ENCODE measurements at regions of chr11 and their contacts with region 1.

Region 1: DNA sequence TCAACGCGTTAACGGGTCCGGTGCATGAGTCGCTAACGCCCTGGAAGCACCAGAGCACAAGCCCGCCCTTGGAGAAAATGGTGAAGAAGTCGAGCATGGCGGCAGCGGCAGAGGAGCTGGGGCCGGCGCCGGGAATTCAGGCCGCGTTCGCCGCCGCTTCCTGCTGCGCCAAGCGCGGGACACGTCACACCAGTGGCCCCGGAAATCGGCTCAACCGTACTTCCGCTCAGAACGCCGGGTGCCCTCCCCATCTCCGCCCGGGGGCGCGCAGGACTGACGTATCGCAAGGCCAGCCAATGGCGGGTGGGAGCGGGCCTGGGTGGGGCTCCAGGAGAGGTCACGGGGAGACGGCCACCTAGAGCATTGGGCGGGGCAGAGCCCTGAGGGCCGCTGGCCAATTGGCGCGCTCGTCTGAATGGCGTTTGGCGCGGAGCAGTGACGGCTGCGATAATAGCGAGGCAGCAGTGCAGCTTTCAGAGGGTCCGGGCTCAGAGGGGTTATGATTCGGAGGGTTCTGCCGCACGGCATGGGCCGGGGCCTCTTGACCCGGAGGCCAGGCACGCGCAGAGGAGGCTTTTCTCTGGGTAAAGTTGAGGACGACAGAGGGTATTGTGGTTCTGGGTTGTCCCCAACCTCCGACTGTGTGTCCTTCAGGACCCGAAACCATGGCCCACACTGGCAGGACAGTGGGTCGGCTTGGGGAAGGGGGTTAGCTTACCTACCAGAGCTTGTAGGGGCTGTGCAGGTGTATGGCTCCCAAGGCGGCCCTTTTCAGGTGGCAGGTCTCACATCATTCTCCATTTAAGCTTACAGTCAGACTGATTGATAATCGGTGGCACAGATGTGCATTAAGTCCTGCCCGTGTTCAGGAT is at the starts of genes FOXRED1 and SRPRA:
- DNase-seq: peak; percentile 98 to 100 (median 100)
- ATAC-seq: peak; percentile 100
- H3K4me3 ChIP-seq: peak within 1 kb of the TSS; percentile 99
- H3K4me3 Mint-ChIP-seq: peak within 1 kb of the TSS; percentile 91 to 98 (median 97)
- H3K27ac ChIP-seq: peak within 1 kb of the TSS; percentile 94
- H3K27ac Mint-ChIP-seq: peak within 1 kb of the TSS; percentile 94 to 99 (median 98)
- H3K4me1 ChIP-seq: peaks cover 22 to 23% of the 10 kb centered on the region in 2 donors
- H3K4me1 Mint-ChIP-seq: peaks cover 26 to 60% (median 47%) of the 10 kb centered on the region in 7 donors
- H3K27me3 ChIP-seq: no peaks in the 10 kb centered on the region
- H3K27me3 Mint-ChIP-seq: no peaks in the 10 kb centered on the region
- total RNA-seq, gene FOXRED1: 27.5 to 42.7 (median 35.5) TPM
- total RNA-seq, gene SRPRA: 141 to 179 (median 150) TPM

Region 2: DNA sequence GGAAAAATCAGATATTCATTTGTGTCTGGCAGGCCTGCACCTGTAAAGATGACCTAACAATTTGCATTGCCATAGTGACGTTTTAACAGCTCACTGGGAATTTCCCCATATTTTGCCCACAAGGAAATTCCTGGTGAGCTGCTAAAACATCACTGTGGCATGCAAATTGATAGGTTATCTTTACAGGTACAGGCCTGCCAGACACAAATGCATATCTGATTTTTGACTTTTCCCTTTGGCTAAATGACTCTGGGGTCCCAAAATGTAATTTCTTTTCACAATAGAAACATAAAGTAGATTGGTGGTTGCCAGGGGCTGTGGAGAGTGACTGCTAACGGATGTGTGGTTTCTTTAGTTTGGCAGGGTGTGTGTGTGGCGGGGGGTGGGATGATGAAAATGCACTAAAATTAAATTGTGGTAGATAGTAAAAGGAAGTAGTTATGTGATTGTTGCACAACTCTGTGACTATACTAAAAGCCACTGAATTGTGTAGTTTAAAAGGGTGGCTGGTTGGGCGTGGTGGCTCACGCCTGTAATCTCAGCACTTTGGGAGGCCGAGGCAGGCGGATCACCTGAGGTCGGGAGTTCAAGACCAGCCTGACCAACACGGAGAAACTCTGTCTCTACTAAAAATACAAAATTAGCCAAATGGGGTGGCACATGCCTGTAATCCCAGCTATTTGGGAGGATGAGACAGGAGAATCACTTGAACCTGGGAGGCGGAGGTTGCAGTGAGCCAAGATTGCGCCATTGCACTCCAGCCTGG is 754.4 kb before region 1 on chr11:
- CTCF ChIA-PET with region 1: no interaction called
- POLR2A ChIA-PET with region 1: no interaction called
- intact Hi-C with region 1: loop called in 1 of 2 experiments (anchors 2 kb)
- DNase-seq: peak; percentile 16 to 72 (median 53)
- ATAC-seq: peak; percentile 87
- H3K4me3 ChIP-seq: no peak overlapping the region
- H3K4me3 Mint-ChIP-seq: peak overlapping the region; percentile 12 to 72 (median 44)
- H3K27ac ChIP-seq: peak overlapping the region; percentile 56
- H3K27ac Mint-ChIP-seq: peak overlapping the region; percentile 58 to 94 (median 85)
- H3K4me1 ChIP-seq: peaks cover 17 to 24% of the 10 kb centered on the region in 2 donors
- H3K4me1 Mint-ChIP-seq: peaks cover 30 to 47% (median 38%) of the 10 kb centered on the region in 7 donors
- H3K27me3 ChIP-seq: no peaks in the 10 kb centered on the region
- H3K27me3 Mint-ChIP-seq: no peaks in the 10 kb centered on the region

Region 3: DNA sequence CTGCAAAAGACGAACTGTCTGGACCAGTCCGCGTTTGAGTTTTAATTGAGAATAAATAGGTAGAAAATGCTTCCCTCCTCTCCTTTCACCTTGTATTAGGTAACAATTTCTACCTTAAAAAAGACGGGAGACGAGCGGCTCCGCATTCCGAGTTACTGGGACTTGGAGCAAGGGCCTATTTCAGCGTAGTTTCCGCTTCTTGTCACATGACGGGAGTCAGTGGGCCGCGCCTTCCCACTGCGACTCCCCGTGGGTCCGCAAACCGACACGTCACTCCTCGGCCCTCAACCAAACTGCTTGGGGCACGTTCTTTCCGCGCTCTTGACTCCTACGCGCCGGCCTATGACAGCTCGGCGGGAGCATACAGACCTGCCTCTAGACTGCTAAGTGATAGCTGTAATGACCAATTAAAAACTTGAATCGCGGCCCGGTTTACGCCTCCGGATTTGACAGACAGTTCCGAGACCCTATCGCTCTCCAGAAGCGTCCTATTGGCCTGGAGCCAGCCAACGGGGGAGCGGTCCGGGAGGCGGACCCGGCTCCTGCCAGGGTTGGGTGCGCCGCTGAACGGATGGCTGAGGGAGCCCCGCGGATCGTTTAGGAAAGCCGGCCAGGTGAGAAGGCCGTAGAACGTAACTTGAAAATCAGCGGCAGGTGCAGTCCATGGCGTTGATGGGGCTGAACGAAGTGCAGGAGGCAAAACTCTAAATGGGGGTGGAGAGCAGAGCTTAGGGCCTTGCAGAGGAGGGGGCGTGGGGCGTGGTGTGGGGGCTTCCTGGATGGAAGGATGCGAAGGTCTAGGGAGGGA is 676.4 kb before region 1 on chr11 and contains the start of gene STT3A:
- CTCF ChIA-PET with region 1: no interaction called
- POLR2A ChIA-PET with region 1: interaction called, 3 read pairs
- intact Hi-C with region 1: loop called (anchors 1 to 2 kb)
- DNase-seq: peak; percentile 94 to 99 (median 99)
- ATAC-seq: peak; percentile 96
- H3K4me3 ChIP-seq: peak within 1 kb of the TSS; percentile 94
- H3K4me3 Mint-ChIP-seq: peak within 1 kb of the TSS; percentile 88 to 99 (median 96)
- H3K27ac ChIP-seq: peak within 1 kb of the TSS; percentile 95
- H3K27ac Mint-ChIP-seq: peak within 1 kb of the TSS; percentile 94 to 100 (median 99)
- H3K4me1 ChIP-seq: peaks cover 13% of the 10 kb centered on the region in 2 donors
- H3K4me1 Mint-ChIP-seq: peaks cover 30 to 62% (median 53%) of the 10 kb centered on the region in 7 donors
- H3K27me3 ChIP-seq: no peaks in the 10 kb centered on the region
- H3K27me3 Mint-ChIP-seq: no peaks in the 10 kb centered on the region
- total RNA-seq, gene STT3A: 39.6 to 153 (median 84.5) TPM

Region 4: GRCh38 chr11:125902927-125903710 is 365.8 kb before region 1 on chr11 and contains the start of gene PUS3:
- CTCF ChIA-PET with region 1: no interaction called
- POLR2A ChIA-PET with region 1: interaction called, 4 read pairs
- intact Hi-C with region 1: loop called (anchors 1 kb)
- DNase-seq: peak; percentile 73 to 88 (median 83)
- ATAC-seq: peak; percentile 96
- H3K4me3 ChIP-seq: peak within 1 kb of the TSS; percentile 91
- H3K4me3 Mint-ChIP-seq: peak within 1 kb of the TSS; percentile 82 to 98 (median 96)
- H3K27ac ChIP-seq: peak within 1 kb of the TSS; percentile 86
- H3K27ac Mint-ChIP-seq: peak within 1 kb of the TSS; percentile 83 to 96 (median 92)
- H3K4me1 ChIP-seq: peaks cover 7 to 13% of the 10 kb centered on the region in 2 donors
- H3K4me1 Mint-ChIP-seq: peaks cover 21 to 54% (median 39%) of the 10 kb centered on the region in 7 donors
- H3K27me3 ChIP-seq: peaks cover 0 to 4% of the 10 kb centered on the region in 2 donors
- H3K27me3 Mint-ChIP-seq: peaks cover 18 to 40% (median 29%) of the 10 kb centered on the region in 5 donors
- total RNA-seq, gene PUS3: 4.6 to 15.3 (median 9.3) TPM

Region 5: GRCh38 chr11:126062679-126063506 is 206.1 kb before region 1 on chr11 and contains the start of gene CDON:
- CTCF ChIA-PET with region 1: no interaction called
- POLR2A ChIA-PET with region 1: no interaction called
- intact Hi-C with region 1: loop called (anchors 1 kb)
- DNase-seq: peak; percentile 88 to 97 (median 93)
- ATAC-seq: peak; percentile 92
- H3K4me3 ChIP-seq: peak within 1 kb of the TSS; percentile 83
- H3K4me3 Mint-ChIP-seq: peak within 1 kb of the TSS; percentile 79 to 93 (median 92)
- H3K27ac ChIP-seq: peak within 1 kb of the TSS; percentile 76
- H3K27ac Mint-ChIP-seq: peak within 1 kb of the TSS; percentile 79 to 98 (median 97)
- H3K4me1 ChIP-seq: peaks cover 4 to 5% of the 10 kb centered on the region in 2 donors
- H3K4me1 Mint-ChIP-seq: peaks cover 5 to 17% (median 7%) of the 10 kb centered on the region in 7 donors
- H3K27me3 ChIP-seq: no peaks in the 10 kb centered on the region
- H3K27me3 Mint-ChIP-seq: peaks cover 0 to 56% (median 5%) of the 10 kb centered on the region in 5 donors
- total RNA-seq, gene CDON: 1.5 to 4.8 (median 2.3) TPM

Region 6: DNA sequence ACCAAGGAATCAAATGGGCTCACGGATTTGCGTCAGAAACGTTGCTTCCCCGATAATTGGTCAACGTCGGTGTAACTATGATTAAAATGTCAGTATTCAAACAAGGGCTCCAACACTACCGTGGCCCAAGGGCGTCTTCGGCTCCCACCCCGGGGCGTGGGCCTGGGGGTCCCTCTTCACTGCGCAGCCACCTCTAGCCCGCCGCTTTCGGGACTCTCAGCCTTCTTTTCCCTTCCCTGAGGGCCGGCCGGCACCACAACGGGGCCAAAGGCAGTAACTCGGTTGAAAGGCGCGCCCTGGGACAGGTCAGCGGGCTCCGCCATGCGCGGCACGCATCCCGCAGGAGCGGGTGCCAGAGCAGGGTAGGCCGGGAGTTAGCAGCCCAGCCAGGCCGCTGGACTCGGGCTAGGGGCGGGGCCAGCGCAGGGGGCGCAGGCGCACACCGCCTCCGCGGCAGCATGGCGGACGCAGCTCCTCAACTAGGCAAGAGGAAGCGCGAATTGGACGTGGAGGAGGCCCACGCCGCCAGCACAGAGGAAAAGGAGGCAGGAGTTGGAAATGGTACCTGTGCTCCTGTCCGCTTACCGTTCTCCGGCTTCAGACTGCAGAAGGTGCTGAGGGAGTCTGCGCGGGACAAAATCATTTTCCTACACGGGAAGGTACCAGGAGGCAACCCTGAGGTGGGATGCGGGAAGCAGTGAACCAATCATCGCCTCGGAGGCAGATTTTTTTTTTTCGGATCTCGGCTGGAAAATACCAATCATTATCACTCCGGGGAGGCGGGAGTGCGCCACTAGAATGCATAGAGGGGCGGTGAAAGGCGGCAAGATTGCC is 34.9 kb after region 1 on chr11 and contains the start of gene DCPS:
- CTCF ChIA-PET with region 1: no interaction called
- POLR2A ChIA-PET with region 1: interaction called, 20 read pairs
- intact Hi-C with region 1: loop called (anchors 1 kb)
- DNase-seq: peak; percentile 78 to 94 (median 86)
- ATAC-seq: peak; percentile 99
- H3K4me3 ChIP-seq: peak within 1 kb of the TSS; percentile 100
- H3K4me3 Mint-ChIP-seq: peak within 1 kb of the TSS; percentile 91 to 99 (median 97)
- H3K27ac ChIP-seq: peak within 1 kb of the TSS; percentile 97
- H3K27ac Mint-ChIP-seq: peak within 1 kb of the TSS; percentile 87 to 99 (median 96)
- H3K4me1 ChIP-seq: peaks cover 18 to 20% of the 10 kb centered on the region in 2 donors
- H3K4me1 Mint-ChIP-seq: peaks cover 19 to 50% (median 45%) of the 10 kb centered on the region in 7 donors
- H3K27me3 ChIP-seq: no peaks in the 10 kb centered on the region
- H3K27me3 Mint-ChIP-seq: no peaks in the 10 kb centered on the region
- total RNA-seq, gene DCPS: 11.0 to 37.2 (median 17.4) TPM

Measured in naive thymus-derived CD4-positive, alpha-beta T cell (primary cell).